PC-9 (cell line): ENCODE measurements at regions of chr5 and their contacts with region 1.

Region 1: GRCh38 chr5:138305797-138306196 is 25.8 kb downstream of the CDC25C start:
- DNase-seq: no peak
- H3K4me3 ChIP-seq: no peak overlapping the region
- H3K27ac ChIP-seq: no peak overlapping the region
- H3K4me1 ChIP-seq: no peaks in the 10 kb centered on the region
- H3K27me3 ChIP-seq: no peaks in the 10 kb centered on the region
- CTCF ChIP-seq: no peak

Region 2: DNA sequence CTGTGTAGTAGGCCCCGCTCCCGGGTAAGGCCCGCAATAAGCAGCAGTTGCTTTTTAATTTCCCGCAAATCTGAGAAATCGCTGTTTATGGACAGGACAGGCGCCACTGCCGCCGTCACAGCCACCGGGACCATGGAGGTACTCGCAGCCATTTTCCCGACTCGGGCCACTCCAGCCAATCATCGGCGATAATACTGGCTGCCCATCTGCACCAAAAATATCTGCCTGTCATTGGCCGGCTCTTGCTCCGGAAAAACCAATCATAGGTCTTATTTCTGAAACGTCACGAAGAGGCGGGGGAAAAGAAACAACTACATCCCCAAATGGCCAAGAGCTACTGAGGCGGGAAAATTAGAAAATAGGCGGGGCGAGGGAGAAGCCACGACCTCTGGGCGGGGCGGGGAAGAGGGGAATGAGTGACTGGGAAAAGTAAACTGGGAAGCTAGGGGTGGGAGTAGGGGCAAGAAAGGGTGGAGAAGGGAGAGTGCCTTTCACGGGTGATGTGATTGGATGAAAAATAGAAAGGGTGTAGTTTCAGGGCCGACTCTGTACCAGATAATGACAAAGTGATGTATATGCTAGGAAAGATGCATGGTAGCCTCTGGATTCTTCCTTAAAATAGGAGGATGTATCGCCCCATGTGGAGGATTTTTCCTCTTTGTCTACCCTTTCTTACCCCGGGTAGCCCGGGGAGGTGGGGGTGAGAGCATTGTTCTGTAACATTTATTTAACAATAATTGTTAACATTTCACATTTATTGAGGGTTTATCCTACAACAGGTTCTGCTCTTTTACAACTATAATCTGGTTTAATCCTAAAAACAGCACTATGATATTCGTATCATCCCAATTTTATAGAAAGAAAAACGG is 92.4 kb before region 1 on chr5 and contains the start of gene CDC23:
- CTCF ChIA-PET with region 1: interaction called, 3 read pairs
- POLR2A ChIA-PET with region 1: interaction called, 14 read pairs
- intact Hi-C with region 1: no loop called
- DNase-seq: peak; percentile 93 to 97
- H3K4me3 ChIP-seq: peak within 1 kb of the TSS; percentile 93
- H3K27ac ChIP-seq: no peak within 1 kb of the TSS
- H3K4me1 ChIP-seq: peaks cover 8% of the 10 kb centered on the region
- H3K27me3 ChIP-seq: no peaks in the 10 kb centered on the region
- CTCF ChIP-seq: no peak
- total RNA-seq, gene CDC23: 40.5 and 42.4 TPM in 2 replicates